Gastrocnemius medialis (tissue), 4 donors: ENCODE measurements at regions of chr19 and their contacts with region 1.

Region 1: DNA sequence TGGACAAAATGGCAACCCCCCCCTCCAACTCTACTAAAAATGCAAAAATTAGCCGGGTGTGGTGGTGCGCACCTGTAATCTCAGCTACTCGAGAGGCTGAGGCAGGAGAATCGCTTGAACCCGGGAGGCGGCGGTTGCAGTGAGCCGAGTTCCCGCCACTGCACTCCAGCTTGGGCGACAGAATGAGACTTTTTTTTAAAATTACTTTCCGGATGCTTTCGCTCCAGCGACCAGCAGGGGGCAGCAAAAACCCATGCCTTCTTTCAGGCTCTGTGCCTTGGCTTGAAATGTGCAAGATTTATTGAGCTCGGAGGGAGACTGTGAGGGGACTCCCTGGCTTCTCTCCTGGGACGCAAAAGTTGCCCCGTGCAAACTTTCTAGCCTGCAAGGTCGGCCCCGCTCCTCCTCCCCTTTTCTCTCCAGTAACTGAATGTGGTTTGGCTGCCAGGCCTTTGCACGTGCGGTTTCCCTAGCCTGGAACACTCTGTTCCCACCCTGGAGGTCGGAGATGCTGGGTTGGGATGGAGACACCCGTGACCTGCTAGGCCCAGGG is 61.4 kb upstream of the NFIC start:
- DNase-seq: peak; percentile 48 to 51
- ATAC-seq: peak; percentile 70 to 75
- H3K4me3 ChIP-seq: no peak overlapping the region
- H3K27ac ChIP-seq: no peak overlapping the region
- H3K4me1 ChIP-seq: peaks cover 3% of the 10 kb centered on the region in 2 donors
- H3K27me3 ChIP-seq: peaks cover 28 to 55% (median 46%) of the 10 kb centered on the region in 3 donors
- CTCF ChIP-seq: peak; percentile 86 to 93 (median 88)
- POLR2A ChIP-seq: no peak

Region 2: DNA sequence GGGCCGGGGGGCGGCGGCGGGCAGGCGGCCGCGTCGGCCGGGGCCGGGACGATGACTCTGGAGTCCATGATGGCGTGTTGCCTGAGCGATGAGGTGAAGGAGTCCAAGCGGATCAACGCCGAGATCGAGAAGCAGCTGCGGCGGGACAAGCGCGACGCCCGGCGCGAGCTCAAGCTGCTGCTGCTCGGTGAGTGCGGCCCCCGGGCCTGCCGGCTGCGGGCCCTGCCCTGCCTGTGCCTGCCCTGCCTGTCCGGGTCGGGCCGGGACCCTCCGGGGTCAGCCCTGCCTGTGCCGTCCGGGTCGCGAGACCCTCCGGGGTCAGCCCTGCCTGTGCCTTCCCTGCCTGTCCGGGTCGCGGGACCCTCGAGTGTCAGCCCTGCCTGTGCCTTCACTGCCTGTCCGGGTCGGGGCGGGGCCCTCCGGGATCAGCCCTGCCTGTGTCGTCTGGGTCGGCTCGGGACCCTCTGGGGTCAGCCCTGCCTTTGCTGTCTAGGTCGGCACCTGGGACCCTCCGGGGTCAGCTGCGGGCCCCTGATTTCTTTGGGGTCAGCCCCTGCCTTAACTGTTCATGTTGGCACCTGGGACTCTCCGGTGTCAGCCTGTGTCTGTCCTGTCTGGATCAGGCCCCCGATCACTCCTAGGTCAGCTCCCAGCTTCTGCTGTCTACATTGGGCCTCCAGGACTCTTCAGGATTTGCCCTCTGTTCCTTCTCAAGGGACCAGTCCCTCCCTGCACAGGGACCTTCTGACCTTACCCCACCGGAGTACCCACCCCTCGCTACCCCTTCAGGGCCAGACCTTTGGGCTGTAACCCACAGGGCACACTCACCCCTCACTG is 210.1 kb before region 1 on chr19:
- in situ Hi-C with region 1: no loop called
- intact Hi-C with region 1: no loop called
- DNase-seq: no peak
- ATAC-seq: no peak
- H3K4me3 ChIP-seq: peak overlapping the region; percentile 69 to 84 (median 78)
- H3K27ac ChIP-seq: peak overlapping the region; percentile 79 to 92 (median 85)
- H3K4me1 ChIP-seq: peaks cover 39 to 50% of the 10 kb centered on the region in 2 donors
- H3K27me3 ChIP-seq: no peaks in the 10 kb centered on the region
- CTCF ChIP-seq: no peak
- POLR2A ChIP-seq: no peak

Region 3: DNA sequence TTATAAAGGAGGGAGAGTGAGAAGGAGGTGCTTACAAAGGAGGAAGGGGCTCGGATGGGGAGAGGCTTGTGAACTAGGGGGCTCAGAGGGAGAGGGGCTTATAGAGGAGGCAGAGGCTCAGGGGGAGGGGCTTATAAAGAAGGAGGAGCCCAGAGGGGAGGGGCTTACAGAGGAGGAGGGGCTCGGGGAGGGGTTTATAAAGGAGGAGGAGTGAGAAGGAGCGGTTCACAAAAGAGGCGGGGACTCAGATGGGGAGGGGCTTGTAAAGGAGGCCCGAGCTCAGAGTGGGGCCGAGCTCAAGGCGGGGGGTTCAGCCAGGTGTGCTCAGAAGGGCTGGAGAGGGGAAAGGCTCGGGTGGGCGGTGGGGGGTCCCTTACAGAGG is 174.9 kb after region 1 on chr19:
- in situ Hi-C with region 1: loop called in 3 of 4 experiments (anchors 10 kb)
- intact Hi-C with region 1: no loop called
- DNase-seq: no peak
- ATAC-seq: no peak
- H3K4me3 ChIP-seq: no peak overlapping the region
- H3K27ac ChIP-seq: no peak overlapping the region
- H3K4me1 ChIP-seq: no peaks in the 10 kb centered on the region
- H3K27me3 ChIP-seq: peaks cover 43 to 61% (median 51%) of the 10 kb centered on the region in 3 donors
- CTCF ChIP-seq: no peak
- POLR2A ChIP-seq: no peak